ENCODE measurements at regions of chr4 and their contacts with region 1.

Region 1: DNA sequence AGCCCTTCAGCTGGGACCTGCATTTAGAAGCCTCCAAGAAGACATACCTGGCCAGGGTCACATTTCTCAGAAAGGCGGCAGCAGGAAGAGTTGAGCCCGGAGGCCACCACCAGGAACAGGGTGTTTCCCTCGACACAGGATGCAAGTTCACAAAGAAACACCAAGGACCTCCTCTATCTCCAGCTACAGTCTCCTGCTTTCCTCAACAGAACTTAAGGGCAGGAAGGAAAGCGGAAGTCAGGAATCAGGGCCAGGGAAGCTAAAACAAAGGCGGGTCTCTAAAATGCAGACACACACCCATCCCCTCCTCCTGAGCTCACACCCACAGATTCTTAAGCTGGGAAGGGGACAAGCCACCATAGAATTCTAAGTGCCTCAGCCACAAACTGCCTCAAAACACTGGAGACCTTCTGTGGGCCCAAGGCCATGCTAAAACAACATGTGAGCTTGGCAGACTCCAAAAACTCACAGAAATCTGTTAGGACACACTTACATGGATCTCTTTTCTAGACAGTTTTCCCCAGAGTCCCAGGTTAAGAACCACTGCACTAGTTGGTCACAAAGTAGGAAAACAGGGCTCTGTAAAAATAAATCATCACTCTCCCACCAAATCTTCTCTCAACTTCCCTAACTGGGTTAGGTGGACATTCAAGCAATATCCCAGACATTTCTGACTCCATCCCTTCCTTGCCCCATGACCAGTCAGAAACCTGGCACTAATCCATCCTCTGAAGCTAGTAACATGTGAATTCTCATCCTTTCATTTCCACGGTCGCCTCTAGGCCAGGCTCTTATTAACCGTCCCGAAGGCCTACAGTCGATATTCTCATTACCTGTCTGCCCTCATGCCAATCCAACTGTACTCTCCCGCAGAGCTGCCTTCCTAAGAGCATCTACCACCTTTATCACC is 163.2 kb downstream of the APBB2 start:
- DNase-seq: no peak

Region 2: DNA sequence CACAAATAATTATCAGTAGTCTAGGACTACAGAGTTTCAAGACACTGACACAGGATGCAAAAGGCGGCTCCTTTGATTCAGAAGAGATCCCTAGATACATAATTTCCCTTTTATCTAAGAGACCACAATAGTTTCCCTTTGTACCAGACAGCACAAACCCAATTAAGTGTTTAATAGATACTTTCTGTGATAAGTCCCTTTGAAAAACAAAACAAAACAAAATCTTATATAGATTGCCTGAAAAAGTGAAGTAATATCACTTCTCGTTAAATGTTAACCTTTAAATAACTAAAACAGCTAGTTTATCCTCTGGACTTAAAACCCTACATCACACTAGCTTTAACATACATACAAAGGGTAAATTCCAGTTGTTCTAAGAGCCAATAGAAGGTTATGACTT is 113.3 kb after region 1 on chr4:
- intact Hi-C with region 1: no loop called
- DNase-seq: no peak

Region 3: GRCh38 chr4:42488114-42488513 is 1437.0 kb after region 1 on chr4:
- intact Hi-C with region 1: loop called in 1 of 2 experiments (anchors 5 kb)
- DNase-seq: no peak